ENCODE measurements at regions of chr10 and their contacts with region 1.

Region 1: DNA sequence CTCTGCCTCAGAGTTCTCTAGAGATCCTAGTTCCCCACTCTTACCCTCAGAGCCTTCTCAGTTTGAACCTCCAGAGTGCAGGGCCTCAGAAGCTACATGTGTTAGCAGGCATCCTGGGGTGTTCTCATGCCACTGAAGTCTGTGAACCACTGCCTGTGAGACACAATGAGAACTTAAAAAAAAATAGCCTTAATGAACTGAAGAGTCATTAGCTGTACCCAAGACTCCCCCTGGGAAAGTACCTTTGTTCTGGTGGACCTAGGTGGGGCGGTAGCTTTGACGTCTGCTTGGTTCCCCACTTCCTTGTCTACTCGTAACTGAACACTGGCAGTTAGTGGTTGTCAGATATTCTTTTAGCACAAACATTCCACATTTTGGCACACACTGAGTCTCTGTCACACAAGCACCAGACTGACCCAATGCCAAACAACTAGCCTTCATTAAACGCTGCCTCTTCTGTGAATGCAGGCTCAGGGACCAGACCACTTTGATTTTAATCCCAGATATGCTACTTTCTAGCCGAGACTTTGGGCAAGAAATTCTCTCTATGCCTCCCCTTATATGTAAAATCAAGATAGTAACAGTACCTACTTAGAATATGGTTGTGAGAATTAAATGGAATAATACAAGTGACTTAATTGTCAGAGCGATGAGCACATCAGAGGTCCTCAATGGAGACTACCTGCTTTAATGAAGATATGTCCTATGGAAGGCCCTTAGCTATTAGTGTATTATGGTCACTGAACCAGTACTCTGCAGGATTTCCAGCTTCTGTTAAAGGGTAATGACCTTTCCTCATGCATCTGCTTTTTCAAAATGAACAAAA is 75.3 kb upstream of the CC2D2B start:
- H3K4me3 Mint-ChIP-seq: no peak overlapping the region
- H3K27ac Mint-ChIP-seq: peak overlapping the region; percentile 80
- H3K4me1 Mint-ChIP-seq: peaks cover 50% of the 10 kb centered on the region
- H3K27me3 Mint-ChIP-seq: no peaks in the 10 kb centered on the region

Region 2: GRCh38 chr10:95792874-95793285 is 39.5 kb before region 1 on chr10:
- intact Hi-C with region 1: loop called (anchors 5 kb)
- H3K4me3 Mint-ChIP-seq: peak overlapping the region; percentile 9
- H3K27ac Mint-ChIP-seq: peak overlapping the region; percentile 96
- H3K4me1 Mint-ChIP-seq: peaks cover 80% of the 10 kb centered on the region
- H3K27me3 Mint-ChIP-seq: no peaks in the 10 kb centered on the region

Region 3: DNA sequence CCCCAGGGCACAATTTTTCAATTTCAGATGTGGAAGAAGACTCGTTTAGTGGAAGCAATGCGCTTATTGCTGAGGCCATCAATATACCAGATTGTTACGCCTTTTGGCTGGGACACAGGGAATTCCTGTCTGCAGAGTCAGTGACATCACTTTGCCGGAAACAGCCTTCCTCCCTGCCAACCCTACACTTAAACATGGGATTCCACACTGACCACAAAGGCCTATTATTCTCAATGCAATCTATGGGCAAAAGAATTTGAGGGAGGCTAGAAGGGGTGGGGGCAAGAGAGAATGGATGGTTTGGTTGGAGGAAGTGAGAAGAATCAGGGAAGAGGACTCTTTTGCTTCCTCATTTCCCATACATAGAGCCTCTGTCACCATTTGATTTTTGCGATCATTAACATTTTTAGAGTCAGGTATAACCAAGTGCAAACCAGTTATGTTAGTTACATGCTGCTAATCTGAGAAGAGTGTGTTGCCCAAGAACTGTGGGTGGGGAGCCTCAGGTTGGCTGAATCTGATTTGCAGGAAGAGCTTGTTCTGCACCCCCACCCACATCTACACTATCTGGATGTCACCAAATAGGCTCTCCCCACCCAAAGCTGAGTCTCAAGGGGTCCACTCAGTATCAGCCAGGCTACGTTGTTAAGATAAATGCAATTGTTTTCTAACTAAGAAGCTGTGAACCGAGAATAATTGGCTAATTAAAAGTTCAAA is 18.3 kb before region 1 on chr10:
- intact Hi-C with region 1: no loop called
- H3K4me3 Mint-ChIP-seq: no peak overlapping the region
- H3K27ac Mint-ChIP-seq: peak overlapping the region; percentile 2
- H3K4me1 Mint-ChIP-seq: peaks cover 53% of the 10 kb centered on the region
- H3K27me3 Mint-ChIP-seq: no peaks in the 10 kb centered on the region